Prostate gland (tissue), 2 donors: ENCODE measurements at regions of chr2 and their contacts with region 1.

Region 1: GRCh38 chr2:174522553-174522952 is 35.7 kb upstream of the GPR155 start:
- DNase-seq: no peak
- H3K4me3 ChIP-seq: no peak overlapping the region
- H3K27ac ChIP-seq: no peak overlapping the region
- H3K4me1 ChIP-seq: no peaks in the 10 kb centered on the region
- H3K27me3 ChIP-seq: no peaks in the 10 kb centered on the region
- CTCF ChIP-seq: peak in 2 of 4 experiments; percentile 32 to 35
- POLR2A ChIP-seq: no peak

Region 2: DNA sequence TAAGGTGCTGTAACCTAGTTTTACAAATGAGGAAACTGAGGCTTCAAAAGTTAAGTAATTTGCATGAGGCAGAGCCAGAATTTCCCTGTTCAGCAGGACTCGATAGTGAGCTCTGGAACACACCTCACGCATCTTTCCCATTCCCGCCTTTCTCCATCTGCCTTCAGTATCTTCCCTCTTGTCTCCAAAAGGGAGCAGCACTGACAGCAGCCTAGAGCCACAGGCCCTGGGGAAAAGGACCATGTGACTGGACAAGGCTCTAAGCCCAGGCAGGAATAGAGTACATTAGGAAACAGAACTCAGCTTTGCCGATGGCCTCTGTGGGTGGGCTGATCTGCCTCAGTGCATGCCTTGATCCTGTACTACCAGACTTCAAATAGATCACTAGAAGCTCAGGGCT is 57.2 kb before region 1 on chr2:
- intact Hi-C with region 1: loop called (anchors 5 kb)
- DNase-seq: no peak
- H3K4me3 ChIP-seq: no peak overlapping the region
- H3K27ac ChIP-seq: no peak overlapping the region
- H3K4me1 ChIP-seq: no peaks in the 10 kb centered on the region
- H3K27me3 ChIP-seq: no peaks in the 10 kb centered on the region
- CTCF ChIP-seq: no peak
- POLR2A ChIP-seq: no peak